Activated CD8-positive, alpha-beta T cell treated with anti-CD3 and anti-CD28 coated beads for 36 hours (primary cell): ENCODE measurements at regions of chr19 and their contacts with region 1.

Region 1: GRCh38 chr19:47013041-47013517 is 6.6 kb upstream of the NPAS1 start:
- DNase-seq: peak; percentile 65
- ATAC-seq: peak; percentile 96
- H3K4me3 Mint-ChIP-seq: no peak overlapping the region
- H3K27ac Mint-ChIP-seq: no peak overlapping the region
- H3K4me1 Mint-ChIP-seq: peaks cover 9% of the 10 kb centered on the region
- H3K27me3 Mint-ChIP-seq: peaks cover 4% of the 10 kb centered on the region
- CTCF ChIP-seq: peak; percentile 100

Region 2: GRCh38 chr19:46886546-46887239 is 126.4 kb before region 1 on chr19:
- CTCF ChIA-PET with region 1: interaction called, 11 read pairs
- POLR2A ChIA-PET with region 1: no interaction called
- intact Hi-C with region 1: no loop called
- DNase-seq: no peak
- ATAC-seq: no peak
- H3K4me3 Mint-ChIP-seq: no peak overlapping the region
- H3K27ac Mint-ChIP-seq: no peak overlapping the region
- H3K4me1 Mint-ChIP-seq: peaks cover 22% of the 10 kb centered on the region
- H3K27me3 Mint-ChIP-seq: no peaks in the 10 kb centered on the region
- CTCF ChIP-seq: no peak

Region 3: DNA sequence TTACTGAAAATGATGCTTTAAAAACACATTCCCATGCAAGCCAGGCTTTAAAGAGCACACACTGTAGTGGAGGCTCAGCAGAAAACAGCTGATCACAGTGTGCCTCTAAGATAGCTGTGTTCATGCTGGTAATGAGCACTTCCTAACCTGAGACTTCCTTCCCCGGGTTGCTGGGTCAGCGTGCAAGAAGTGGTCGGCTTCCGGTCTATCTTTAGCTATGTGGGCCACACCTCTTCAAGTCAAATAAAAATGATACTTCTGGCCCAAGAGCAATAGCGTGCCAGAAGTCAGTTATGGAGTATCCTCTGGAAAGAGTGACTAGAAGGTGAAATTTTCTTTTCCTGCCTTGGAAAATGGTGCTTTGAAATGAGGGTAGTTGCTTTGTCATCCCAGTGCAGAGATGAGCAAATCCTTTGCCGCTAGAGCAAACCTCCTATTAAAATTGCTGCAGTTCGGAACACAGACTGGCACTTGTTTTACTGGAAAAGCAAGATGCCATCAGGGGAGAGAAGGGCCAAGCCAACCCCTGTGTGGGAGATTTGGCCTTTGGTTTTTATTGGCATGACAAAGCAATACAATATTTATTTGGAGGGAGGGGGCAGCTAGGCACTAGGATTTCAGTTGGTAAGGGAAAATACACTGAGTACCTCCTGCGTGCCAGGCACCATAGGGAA is 88.1 kb before region 1 on chr19:
- CTCF ChIA-PET with region 1: interaction called, 25 read pairs
- POLR2A ChIA-PET with region 1: no interaction called
- intact Hi-C with region 1: no loop called
- DNase-seq: peak; percentile 31
- ATAC-seq: peak; percentile 72
- H3K4me3 Mint-ChIP-seq: no peak overlapping the region
- H3K27ac Mint-ChIP-seq: peak overlapping the region; percentile 61
- H3K4me1 Mint-ChIP-seq: peaks cover 39% of the 10 kb centered on the region
- H3K27me3 Mint-ChIP-seq: no peaks in the 10 kb centered on the region
- CTCF ChIP-seq: no peak

Region 4: DNA sequence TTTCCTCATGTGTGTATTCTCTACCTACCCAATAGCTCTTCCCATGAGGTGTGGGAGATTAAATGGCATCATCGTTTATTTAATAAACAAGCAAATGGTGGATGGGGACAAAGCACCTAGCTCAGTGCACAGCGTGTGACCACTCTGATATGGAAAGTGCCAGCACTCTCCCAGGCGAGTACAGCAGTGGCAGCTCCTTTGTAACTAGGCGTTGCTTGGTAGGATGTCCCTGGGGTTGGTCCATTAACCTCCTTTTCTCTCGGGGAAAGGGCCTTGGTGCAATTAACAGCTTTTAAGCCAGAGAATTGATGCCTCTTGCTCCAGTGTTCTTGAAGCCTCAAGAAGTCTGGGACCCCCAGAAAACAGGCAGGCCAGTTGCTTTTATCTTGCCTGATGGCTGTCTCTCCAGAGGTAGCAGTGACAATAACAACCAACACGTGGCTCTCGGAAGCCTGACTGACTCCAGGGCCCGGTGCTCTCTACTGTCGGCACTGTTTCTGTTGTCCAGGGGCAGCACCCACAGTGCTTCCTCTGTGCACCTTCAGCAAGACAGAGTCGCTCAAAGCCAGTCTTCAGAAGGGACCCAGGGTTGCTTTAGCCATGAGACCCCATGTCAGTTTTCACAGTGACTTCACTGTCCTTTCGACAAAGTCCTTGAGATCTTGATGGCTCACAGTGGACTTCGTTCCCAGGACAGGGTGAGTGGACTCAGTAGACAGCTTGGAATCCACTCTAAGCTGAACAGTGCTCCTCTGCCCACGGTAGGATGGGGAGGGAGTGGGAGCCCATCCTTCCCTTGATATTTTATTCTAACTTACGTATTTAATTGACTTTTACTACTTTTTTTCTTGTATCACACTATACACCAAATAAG is 27.3 kb before region 1 on chr19:
- CTCF ChIA-PET with region 1: interaction called, 50 read pairs
- POLR2A ChIA-PET with region 1: no interaction called
- intact Hi-C with region 1: no loop called
- DNase-seq: no peak
- ATAC-seq: no peak
- H3K4me3 Mint-ChIP-seq: no peak overlapping the region
- H3K27ac Mint-ChIP-seq: no peak overlapping the region
- H3K4me1 Mint-ChIP-seq: peaks cover 9% of the 10 kb centered on the region
- H3K27me3 Mint-ChIP-seq: no peaks in the 10 kb centered on the region
- CTCF ChIP-seq: no peak

Region 5: GRCh38 chr19:47035127-47036096 is 22.3 kb after region 1 on chr19:
- CTCF ChIA-PET with region 1: interaction called, 67 read pairs
- POLR2A ChIA-PET with region 1: interaction called, 3 read pairs
- intact Hi-C with region 1: no loop called
- DNase-seq: peak; percentile 96
- ATAC-seq: peak; percentile 98
- H3K4me3 Mint-ChIP-seq: peak overlapping the region; percentile 79
- H3K27ac Mint-ChIP-seq: peak overlapping the region; percentile 82
- H3K4me1 Mint-ChIP-seq: peaks cover 14% of the 10 kb centered on the region
- H3K27me3 Mint-ChIP-seq: peaks cover 6% of the 10 kb centered on the region
- CTCF ChIP-seq: peak; percentile 97

Region 6: GRCh38 chr19:47112997-47113849 is 100.1 kb after region 1 on chr19 and contains the start of gene ZC3H4:
- CTCF ChIA-PET with region 1: interaction called, 10 read pairs
- POLR2A ChIA-PET with region 1: interaction called, 3 read pairs
- intact Hi-C with region 1: no loop called
- DNase-seq: peak; percentile 99
- ATAC-seq: peak; percentile 88
- H3K4me3 Mint-ChIP-seq: peak within 1 kb of the TSS; percentile 89
- H3K27ac Mint-ChIP-seq: peak within 1 kb of the TSS; percentile 99
- H3K4me1 Mint-ChIP-seq: peaks cover 24% of the 10 kb centered on the region
- H3K27me3 Mint-ChIP-seq: no peaks in the 10 kb centered on the region
- CTCF ChIP-seq: no peak
- total RNA-seq, gene ZC3H4: 68.5 to 70.2 TPM

Region 7: GRCh38 chr19:47243776-47244547 is 230.9 kb after region 1 on chr19:
- CTCF ChIA-PET with region 1: interaction called, 23 read pairs
- POLR2A ChIA-PET with region 1: no interaction called
- intact Hi-C with region 1: no loop called
- DNase-seq: peak; percentile 95
- ATAC-seq: peak; percentile 71
- H3K4me3 Mint-ChIP-seq: peak overlapping the region; percentile 81
- H3K27ac Mint-ChIP-seq: peak overlapping the region; percentile 98
- H3K4me1 Mint-ChIP-seq: peaks cover 26% of the 10 kb centered on the region
- H3K27me3 Mint-ChIP-seq: no peaks in the 10 kb centered on the region
- CTCF ChIP-seq: peak; percentile 99